ENCODE measurements at regions of chr14 and their contacts with region 1.

Region 1: DNA sequence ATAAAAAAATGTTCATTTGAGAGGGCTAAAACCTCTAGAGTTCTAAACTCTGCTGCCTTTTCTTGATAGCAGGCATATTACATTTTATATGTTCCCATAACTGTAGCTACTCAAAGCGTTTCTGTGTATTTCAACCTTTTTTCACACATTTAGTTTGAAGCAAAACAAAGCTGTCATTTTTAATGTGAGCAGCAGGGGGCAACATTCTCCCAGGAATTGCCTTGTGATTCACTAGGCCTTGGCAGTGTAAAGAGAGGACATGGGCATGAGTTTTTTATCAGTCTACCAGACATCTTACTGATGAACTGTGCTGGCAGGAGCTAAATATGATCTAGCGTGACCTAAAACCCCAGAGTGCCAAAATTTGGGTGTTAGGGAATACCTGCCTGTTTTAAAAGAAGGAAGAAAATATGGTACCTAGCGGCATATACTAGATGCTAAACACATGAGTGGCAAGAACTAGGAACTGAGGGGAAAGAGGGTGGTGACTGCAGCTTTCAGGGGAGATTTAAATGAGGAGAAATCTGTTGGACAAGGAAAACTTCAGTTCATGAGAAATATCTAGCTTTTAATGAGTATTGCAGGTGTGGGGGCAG is 65.3 kb downstream of the IFT43 start:
- DNase-seq: peak; percentile 55 to 60
- ATAC-seq: peak; percentile 75 to 87
- H3K4me3 ChIP-seq: no peak overlapping the region
- H3K27ac ChIP-seq: no peak overlapping the region
- H3K4me1 ChIP-seq: no peaks in the 10 kb centered on the region
- CTCF ChIP-seq: peak; percentile 89
- EP300 ChIP-seq: no peak
- POLR2A ChIP-seq: no peak
- RAD21 ChIP-seq: peak; percentile 85 to 93

Region 2: DNA sequence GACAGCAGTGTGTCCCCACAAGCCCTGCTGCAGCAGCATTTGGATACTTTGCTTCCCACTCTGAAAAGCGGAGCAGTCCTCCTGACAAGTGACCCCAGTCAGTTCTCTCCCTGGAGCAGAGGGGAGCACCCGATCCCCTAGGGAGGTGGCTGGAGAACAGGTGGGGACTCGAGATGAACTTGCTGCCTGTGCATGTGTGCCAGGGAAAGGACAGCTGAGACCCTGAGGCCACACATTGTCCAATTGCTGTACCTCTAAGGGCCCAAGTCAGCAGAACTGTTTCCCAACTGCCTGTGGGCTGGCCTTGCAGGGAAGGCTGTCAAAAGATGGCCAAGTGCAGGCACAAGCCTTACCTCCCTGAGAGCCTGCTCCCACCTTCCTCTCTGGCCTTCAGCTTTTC is 10.2 kb before region 1 on chr14:
- CTCF ChIA-PET with region 1: interaction called, 38 read pairs
- POLR2A ChIA-PET with region 1: no interaction called
- DNase-seq: no peak
- ATAC-seq: no peak
- H3K4me3 ChIP-seq: no peak overlapping the region
- H3K27ac ChIP-seq: no peak overlapping the region
- H3K4me1 ChIP-seq: no peaks in the 10 kb centered on the region
- CTCF ChIP-seq: no peak
- EP300 ChIP-seq: no peak
- POLR2A ChIP-seq: no peak
- RAD21 ChIP-seq: no peak

Region 3: DNA sequence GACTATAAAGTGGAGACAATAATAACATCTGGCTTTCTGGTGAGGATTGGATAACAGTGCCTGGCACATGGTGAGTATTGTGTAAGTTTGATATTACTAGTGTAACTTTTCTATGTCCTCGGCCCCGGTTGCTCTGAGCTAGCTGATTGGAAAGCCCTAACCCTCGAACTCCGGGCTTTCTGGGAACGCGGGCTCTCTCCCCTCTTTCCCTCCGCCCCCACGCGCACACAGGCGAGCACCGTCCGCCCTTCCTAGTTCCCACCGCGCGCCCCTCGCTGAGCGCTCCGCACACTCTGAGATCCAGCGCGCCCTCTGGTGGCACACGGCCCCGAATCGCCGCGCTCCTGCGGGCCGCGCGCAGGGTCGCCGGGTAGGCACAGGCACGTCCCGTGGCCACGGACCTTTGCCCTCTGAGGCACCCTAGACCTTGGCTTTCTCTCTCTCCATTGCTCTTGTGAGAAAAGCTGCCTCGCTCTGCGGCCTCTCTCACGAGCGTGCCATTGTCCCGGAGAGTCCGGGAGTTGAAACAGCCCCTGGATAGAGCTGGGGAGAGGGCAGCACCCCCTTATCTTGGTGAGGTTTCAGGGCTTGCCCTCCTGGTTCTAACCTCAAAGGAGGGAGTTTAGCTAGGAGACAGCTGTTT is 301.9 kb after region 1 on chr14:
- CTCF ChIA-PET with region 1: interaction called, 142 read pairs
- POLR2A ChIA-PET with region 1: no interaction called
- DNase-seq: peak; percentile 49 to 66
- ATAC-seq: peak; percentile 86 to 97
- H3K4me3 ChIP-seq: no peak overlapping the region
- H3K27ac ChIP-seq: peak overlapping the region in 1 of 2 experiments; percentile 25; a peak in 1 of 6 replicates
- H3K4me1 ChIP-seq: no peaks in the 10 kb centered on the region
- CTCF ChIP-seq: peak; percentile 84
- EP300 ChIP-seq: no peak
- POLR2A ChIP-seq: no peak
- RAD21 ChIP-seq: peak; percentile 67 to 82

Region 4: GRCh38 chr14:76386915-76387782 is 336.3 kb after region 1 on chr14:
- CTCF ChIA-PET with region 1: interaction called, 145 read pairs
- POLR2A ChIA-PET with region 1: no interaction called
- DNase-seq: peak; percentile 61 to 86
- ATAC-seq: peak; percentile 92 to 99
- H3K4me3 ChIP-seq: no peak overlapping the region
- H3K27ac ChIP-seq: no peak overlapping the region
- H3K4me1 ChIP-seq: no peaks in the 10 kb centered on the region
- CTCF ChIP-seq: peak; percentile 76
- EP300 ChIP-seq: no peak
- POLR2A ChIP-seq: no peak
- RAD21 ChIP-seq: peak; percentile 87 to 95

Region 5: GRCh38 chr14:76647697-76648298 is 596.9 kb after region 1 on chr14:
- CTCF ChIA-PET with region 1: interaction called, 66 read pairs
- POLR2A ChIA-PET with region 1: no interaction called
- DNase-seq: peak; percentile 71
- ATAC-seq: peak; percentile 71 to 89; a peak in 4 of 6 replicates
- H3K4me3 ChIP-seq: no peak overlapping the region
- H3K27ac ChIP-seq: no peak overlapping the region
- H3K4me1 ChIP-seq: no peaks in the 10 kb centered on the region
- CTCF ChIP-seq: peak; percentile 73
- EP300 ChIP-seq: no peak
- POLR2A ChIP-seq: no peak
- RAD21 ChIP-seq: peak; percentile 59 to 73